ENCODE measurements at regions of chr4 and their contacts with region 1.

Region 1: GRCh38 chr4:64584981-64585557 is 175.8 kb upstream of the TECRL start:
- DNase-seq: no peak
- H3K4me3 ChIP-seq: no peak overlapping the region
- H3K27ac ChIP-seq: no peak overlapping the region
- H3K4me1 ChIP-seq: no peaks in the 10 kb centered on the region
- H3K27me3 ChIP-seq: no peaks in the 10 kb centered on the region
- CTCF ChIP-seq: peak in 1 of 3 donors; percentile 11
- EP300 ChIP-seq: no peak
- POLR2A ChIP-seq: no peak

Region 2: DNA sequence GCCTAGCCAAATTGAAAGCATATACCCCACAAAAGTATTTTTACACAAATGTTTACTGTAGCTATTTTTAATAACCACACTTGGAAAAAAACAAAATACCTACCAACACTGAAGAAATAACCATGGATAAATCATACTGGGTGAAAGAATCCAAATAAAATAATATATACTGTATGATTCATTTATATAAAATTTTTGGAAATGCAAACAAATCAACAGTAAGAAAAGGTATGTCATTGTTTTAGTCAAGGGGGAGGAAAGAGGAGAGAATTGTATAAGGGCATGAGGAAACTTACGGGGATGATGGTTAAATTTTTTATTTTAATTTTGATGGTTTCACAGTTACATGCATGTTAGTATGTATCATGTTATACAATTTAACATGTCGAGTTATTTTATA is 733.6 kb before region 1 on chr4:
- intact Hi-C with region 1: no loop called
- DNase-seq: no peak
- H3K4me3 ChIP-seq: no peak overlapping the region
- H3K27ac ChIP-seq: no peak overlapping the region
- H3K4me1 ChIP-seq: no peaks in the 10 kb centered on the region
- H3K27me3 ChIP-seq: no peaks in the 10 kb centered on the region
- CTCF ChIP-seq: no peak
- EP300 ChIP-seq: no peak
- POLR2A ChIP-seq: no peak

Region 3: DNA sequence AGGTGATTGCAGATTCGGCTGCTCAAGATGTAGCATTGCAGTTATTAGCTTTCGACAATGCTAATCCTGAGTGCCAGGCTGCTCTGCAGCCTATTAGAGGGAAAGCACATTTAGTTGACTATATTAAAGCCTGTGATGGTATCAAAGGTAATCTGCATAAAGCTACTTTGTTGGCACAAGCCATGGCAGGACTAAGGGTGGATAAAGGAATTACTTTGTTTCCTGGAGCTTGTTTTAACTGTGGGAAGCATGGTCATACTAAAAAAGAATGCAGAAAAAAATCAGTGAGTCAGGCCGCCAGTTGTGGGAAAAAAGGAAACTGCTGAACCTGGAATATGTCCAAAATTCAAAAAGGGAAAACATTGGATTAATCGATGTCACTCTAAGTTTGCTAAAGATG is 20.9 kb before region 1 on chr4:
- intact Hi-C with region 1: loop called in 1 of 4 experiments (anchors 1 kb)
- DNase-seq: no peak
- H3K4me3 ChIP-seq: no peak overlapping the region
- H3K27ac ChIP-seq: no peak overlapping the region
- H3K4me1 ChIP-seq: no peaks in the 10 kb centered on the region
- H3K27me3 ChIP-seq: no peaks in the 10 kb centered on the region
- CTCF ChIP-seq: no peak
- EP300 ChIP-seq: no peak
- POLR2A ChIP-seq: no peak